IMR-90 (cell line): ENCODE measurements at regions of chr17 and their contacts with region 1.

Region 1: DNA sequence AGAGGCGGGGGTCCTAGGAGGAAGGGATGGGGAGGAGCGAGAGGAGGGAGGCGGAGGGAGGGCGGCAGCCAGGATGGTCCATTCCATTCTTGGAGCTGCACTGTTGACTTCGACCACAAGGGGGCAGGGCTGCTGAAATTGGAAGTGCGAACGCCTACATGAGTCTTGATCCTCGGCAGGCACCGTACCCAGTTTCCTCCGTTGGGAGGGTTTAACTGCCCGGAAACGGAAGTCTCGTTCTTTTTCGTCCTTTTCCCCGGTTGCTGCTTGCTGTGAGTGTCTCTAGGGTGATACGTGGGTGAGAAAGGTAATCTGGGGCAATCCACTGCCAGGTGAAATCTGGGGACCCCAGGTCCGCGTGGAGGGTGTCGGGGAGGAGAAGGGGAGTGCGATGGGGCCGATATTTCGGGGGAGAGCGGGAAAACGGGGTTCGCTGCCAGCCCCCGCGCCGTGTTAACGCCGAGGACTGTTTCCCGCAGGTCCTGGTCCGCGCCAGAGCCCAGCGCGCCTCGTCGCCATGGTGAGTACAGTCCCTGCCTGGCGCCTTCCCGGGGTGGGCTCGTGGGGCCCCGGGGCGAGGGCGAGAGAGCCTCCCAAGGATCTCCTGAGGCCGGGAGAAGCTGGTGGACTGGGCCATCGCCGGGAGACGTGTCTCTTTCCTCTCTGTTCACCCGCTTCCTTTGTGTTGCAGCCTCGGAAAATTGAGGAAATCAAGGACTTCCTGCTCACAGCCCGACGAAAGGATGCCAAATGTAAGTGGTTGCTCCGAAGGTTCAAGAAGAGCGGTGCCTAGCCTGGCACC is at the start of gene RPL38:
- DNase-seq: peak; percentile 98
- ATAC-seq: peak; percentile 94
- H3K4me3 ChIP-seq: peak within 1 kb of the TSS; percentile 87
- H3K27ac ChIP-seq: peak within 1 kb of the TSS; percentile 76
- H3K4me1 ChIP-seq: peaks cover 5% of the 10 kb centered on the region
- H3K27me3 ChIP-seq: peaks cover 7% of the 10 kb centered on the region
- CTCF ChIP-seq: peak; percentile 98
- POLR2A ChIP-seq: peak; percentile 99
- RAD21 ChIP-seq: peak; percentile 41
- total RNA-seq, gene RPL38: 111 and 296 TPM in 2 replicates

Region 2: DNA sequence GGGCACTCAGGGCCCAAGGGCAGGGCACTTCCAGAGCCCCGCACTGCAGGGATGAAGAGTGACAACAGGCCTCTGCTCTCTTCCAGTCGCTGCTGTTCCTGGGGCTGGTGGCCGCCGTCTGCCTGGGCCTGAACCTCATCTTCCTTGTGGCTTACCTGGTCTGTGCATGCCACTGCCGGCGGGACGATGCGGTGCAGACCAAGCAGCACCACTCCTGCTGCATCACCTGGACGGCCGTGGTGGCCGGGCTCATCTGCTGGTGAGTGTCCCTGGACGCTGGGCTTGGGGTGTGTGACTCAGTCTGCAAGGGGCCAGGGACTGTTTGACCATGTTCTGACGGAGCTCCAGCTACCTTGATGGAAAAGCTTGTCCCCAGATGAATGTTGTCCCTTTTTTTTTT is 18.8 kb after region 1 on chr17:
- CTCF ChIA-PET with region 1: no interaction called
- POLR2A ChIA-PET with region 1: no interaction called
- dilution Hi-C with region 1: no loop called
- in situ Hi-C with region 1: no loop called
- intact Hi-C with region 1: no loop called
- DNase-seq: no peak
- ATAC-seq: no peak
- H3K4me3 ChIP-seq: no peak overlapping the region
- H3K27ac ChIP-seq: no peak overlapping the region
- H3K4me1 ChIP-seq: no peaks in the 10 kb centered on the region
- H3K27me3 ChIP-seq: no peaks in the 10 kb centered on the region; the same call in 1 of the 2 replicates
- CTCF ChIP-seq: no peak
- POLR2A ChIP-seq: no peak
- RAD21 ChIP-seq: no peak

Region 3: GRCh38 chr17:74361230-74362068 is 157.8 kb after region 1 on chr17 and contains the start of gene BTBD17:
- CTCF ChIA-PET with region 1: no interaction called
- POLR2A ChIA-PET with region 1: no interaction called
- dilution Hi-C with region 1: no loop called
- in situ Hi-C with region 1: no loop called
- intact Hi-C with region 1: loop called (anchors 5 kb)
- DNase-seq: peak; percentile 6
- ATAC-seq: peak; percentile 77
- H3K4me3 ChIP-seq: no peak within 1 kb of the TSS
- H3K27ac ChIP-seq: no peak within 1 kb of the TSS
- H3K4me1 ChIP-seq: no peaks in the 10 kb centered on the region
- H3K27me3 ChIP-seq: peaks cover 8% of the 10 kb centered on the region; the same call in 1 of the 2 replicates
- CTCF ChIP-seq: peak; percentile 32
- POLR2A ChIP-seq: no peak
- RAD21 ChIP-seq: peak; percentile 29; the same call in 1 of the 2 replicates
- total RNA-seq, gene BTBD17: not detected in 2 replicates

Region 4: DNA sequence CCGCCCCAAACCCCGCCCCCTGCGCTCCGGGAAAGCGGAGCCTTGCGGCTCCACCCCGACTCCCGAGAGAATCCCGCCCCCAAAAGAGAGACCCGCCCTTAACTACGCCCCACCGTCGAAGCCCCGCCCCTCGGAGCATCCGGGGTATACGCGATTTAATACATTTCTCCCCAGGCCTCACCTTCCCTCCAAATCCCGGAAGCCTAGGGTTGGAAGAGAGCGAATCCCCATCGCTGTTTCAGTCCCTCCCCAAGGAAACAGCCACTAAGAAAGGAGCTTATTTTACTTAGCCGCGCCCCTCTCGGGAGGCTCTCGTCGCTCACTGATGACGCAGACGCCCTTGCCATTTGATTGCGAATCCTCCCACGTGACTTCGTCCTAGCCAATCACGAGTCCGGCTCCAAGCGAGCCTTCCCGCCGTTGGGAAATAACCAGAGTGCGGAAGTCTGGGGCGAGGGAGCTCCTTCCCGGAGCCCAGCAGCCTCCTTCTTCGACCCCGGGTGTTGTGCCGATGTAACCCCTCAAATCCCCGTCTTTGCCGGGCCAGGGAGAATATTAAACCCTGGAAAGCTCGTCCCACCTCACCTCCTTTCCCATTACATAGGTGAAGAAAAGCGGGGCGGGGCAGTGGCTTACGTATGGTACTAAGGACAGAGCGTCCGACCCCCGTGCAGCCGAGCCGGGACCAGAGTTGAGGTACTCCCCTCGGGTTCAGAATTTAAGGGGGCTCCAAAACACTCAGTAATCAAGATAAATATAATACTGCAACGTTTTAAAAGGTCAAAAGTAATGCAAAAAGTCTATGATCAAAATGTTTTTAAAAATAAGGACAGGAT is 669.6 kb after region 1 on chr17:
- CTCF ChIA-PET with region 1: no interaction called
- POLR2A ChIA-PET with region 1: no interaction called
- dilution Hi-C with region 1: no loop called
- in situ Hi-C with region 1: loop called (anchors 25 kb)
- intact Hi-C with region 1: no loop called
- DNase-seq: peak; percentile 100
- ATAC-seq: peak; percentile 94
- H3K4me3 ChIP-seq: peak overlapping the region; percentile 73
- H3K27ac ChIP-seq: peak overlapping the region; percentile 82
- H3K4me1 ChIP-seq: peaks cover 11% of the 10 kb centered on the region
- H3K27me3 ChIP-seq: peaks cover 5% of the 10 kb centered on the region; the same call in 1 of the 2 replicates
- CTCF ChIP-seq: no peak
- POLR2A ChIP-seq: peak; percentile 97
- RAD21 ChIP-seq: no peak